ENCODE measurements at regions of chr3 and their contacts with region 1.

Region 1: DNA sequence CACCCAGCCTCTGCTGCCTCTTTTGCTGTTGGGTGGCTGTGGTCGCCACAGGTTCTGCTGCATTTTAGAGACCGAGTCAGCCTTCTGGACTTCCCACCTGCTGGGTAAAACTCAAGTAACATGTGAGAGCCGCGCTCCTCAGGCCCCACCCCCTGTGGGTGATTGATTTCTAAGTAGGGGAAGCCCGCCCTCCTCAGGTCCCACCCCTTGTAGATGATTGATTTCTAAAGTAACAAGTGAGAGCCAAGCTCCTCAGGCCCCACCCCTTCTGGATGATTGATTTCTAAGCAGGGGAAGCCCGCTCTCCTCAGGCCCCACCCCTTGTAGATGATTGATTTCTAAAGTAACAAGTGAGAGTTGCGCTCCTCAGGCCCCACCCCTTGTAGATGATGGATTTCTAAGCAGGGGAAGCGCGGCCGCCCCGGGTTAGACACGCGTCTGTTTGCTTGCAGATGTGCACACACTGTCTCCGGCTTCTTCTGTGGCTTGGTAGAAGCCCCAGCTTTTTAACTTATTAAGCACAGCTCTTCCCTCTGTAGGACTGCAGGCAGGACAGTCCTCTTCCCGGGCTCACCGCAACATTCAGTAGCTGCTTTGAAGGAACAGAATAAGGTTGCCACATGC is 83.4 kb downstream of the FAM43A start:
- DNase-seq: peak; percentile 92 to 97
- H3K4me3 ChIP-seq: peak overlapping the region; percentile 37
- H3K4me3 Mint-ChIP-seq: peak overlapping the region; percentile 77
- H3K27ac Mint-ChIP-seq: peak overlapping the region; percentile 75
- H3K4me1 ChIP-seq: 0 out of 2 replicates have a peak, but pooled peaks cover 6% of the 10 kb centered on the region
- H3K4me1 Mint-ChIP-seq: peaks cover 11% of the 10 kb centered on the region
- H3K27me3 ChIP-seq: no peaks in the 10 kb centered on the region
- H3K27me3 Mint-ChIP-seq: no peaks in the 10 kb centered on the region
- CTCF ChIP-seq: peak in 1 of 2 experiments; percentile 18

Region 2: GRCh38 chr3:194727435-194728128 is 41.5 kb before region 1 on chr3:
- CTCF ChIA-PET with region 1: no interaction called
- POLR2A ChIA-PET with region 1: no interaction called
- intact Hi-C with region 1: loop called (anchors 1 kb)
- DNase-seq: no peak
- H3K4me3 ChIP-seq: no peak overlapping the region
- H3K4me3 Mint-ChIP-seq: no peak overlapping the region
- H3K27ac Mint-ChIP-seq: no peak overlapping the region
- H3K4me1 ChIP-seq: peaks cover 15% of the 10 kb centered on the region
- H3K4me1 Mint-ChIP-seq: peaks cover 27% of the 10 kb centered on the region
- H3K27me3 ChIP-seq: no peaks in the 10 kb centered on the region
- H3K27me3 Mint-ChIP-seq: no peaks in the 10 kb centered on the region
- CTCF ChIP-seq: no peak

Region 3: DNA sequence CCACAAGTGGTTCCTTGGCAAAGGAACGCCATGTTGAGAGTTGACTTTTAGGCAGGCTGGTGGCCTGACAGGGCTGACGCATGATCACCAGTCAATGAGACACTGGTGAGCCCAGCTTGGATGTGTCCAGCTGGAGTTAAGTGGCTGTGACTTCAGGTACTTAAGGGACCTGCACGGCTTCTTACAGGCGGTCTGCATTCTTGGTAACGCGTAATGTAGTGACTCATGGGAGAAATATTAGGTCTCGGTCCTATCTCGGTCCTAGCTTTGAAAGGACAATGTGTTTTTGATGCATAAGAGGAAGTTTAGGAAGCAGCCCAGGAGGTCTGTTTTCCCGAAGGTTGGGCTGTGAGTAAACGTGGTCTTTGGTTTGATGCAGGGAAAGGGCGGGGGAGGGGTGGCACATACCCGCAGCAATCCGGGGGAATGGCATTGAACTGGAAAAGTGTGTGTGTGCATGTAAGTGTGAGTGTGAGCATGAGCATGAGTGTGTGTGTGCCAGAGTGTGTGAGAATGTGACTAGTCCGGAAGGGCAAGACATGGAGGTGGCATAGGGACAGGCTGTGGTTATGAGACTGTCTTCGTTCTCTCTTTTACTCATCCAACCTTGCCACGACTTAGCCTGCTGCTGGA is 28.2 kb before region 1 on chr3:
- CTCF ChIA-PET with region 1: no interaction called
- POLR2A ChIA-PET with region 1: no interaction called
- intact Hi-C with region 1: loop called (anchors 1 kb)
- DNase-seq: peak; percentile 38 to 63
- H3K4me3 ChIP-seq: no peak overlapping the region
- H3K4me3 Mint-ChIP-seq: peak overlapping the region; percentile 71
- H3K27ac Mint-ChIP-seq: peak overlapping the region; percentile 72
- H3K4me1 ChIP-seq: peaks cover 11% of the 10 kb centered on the region
- H3K4me1 Mint-ChIP-seq: peaks cover 8% of the 10 kb centered on the region
- H3K27me3 ChIP-seq: no peaks in the 10 kb centered on the region
- H3K27me3 Mint-ChIP-seq: no peaks in the 10 kb centered on the region
- CTCF ChIP-seq: no peak

Region 4: GRCh38 chr3:194906229-194906629 is 137.1 kb after region 1 on chr3:
- CTCF ChIA-PET with region 1: no interaction called
- POLR2A ChIA-PET with region 1: no interaction called
- intact Hi-C with region 1: no loop called
- DNase-seq: no peak
- H3K4me3 ChIP-seq: no peak overlapping the region
- H3K4me3 Mint-ChIP-seq: no peak overlapping the region
- H3K27ac Mint-ChIP-seq: no peak overlapping the region
- H3K4me1 ChIP-seq: no peaks in the 10 kb centered on the region
- H3K4me1 Mint-ChIP-seq: no peaks in the 10 kb centered on the region
- H3K27me3 ChIP-seq: no peaks in the 10 kb centered on the region
- H3K27me3 Mint-ChIP-seq: no peaks in the 10 kb centered on the region
- CTCF ChIP-seq: no peak

Measured in Caco-2 (cell line).